ENCODE measurements at regions of chr10 and their contacts with region 1.

Region 1: DNA sequence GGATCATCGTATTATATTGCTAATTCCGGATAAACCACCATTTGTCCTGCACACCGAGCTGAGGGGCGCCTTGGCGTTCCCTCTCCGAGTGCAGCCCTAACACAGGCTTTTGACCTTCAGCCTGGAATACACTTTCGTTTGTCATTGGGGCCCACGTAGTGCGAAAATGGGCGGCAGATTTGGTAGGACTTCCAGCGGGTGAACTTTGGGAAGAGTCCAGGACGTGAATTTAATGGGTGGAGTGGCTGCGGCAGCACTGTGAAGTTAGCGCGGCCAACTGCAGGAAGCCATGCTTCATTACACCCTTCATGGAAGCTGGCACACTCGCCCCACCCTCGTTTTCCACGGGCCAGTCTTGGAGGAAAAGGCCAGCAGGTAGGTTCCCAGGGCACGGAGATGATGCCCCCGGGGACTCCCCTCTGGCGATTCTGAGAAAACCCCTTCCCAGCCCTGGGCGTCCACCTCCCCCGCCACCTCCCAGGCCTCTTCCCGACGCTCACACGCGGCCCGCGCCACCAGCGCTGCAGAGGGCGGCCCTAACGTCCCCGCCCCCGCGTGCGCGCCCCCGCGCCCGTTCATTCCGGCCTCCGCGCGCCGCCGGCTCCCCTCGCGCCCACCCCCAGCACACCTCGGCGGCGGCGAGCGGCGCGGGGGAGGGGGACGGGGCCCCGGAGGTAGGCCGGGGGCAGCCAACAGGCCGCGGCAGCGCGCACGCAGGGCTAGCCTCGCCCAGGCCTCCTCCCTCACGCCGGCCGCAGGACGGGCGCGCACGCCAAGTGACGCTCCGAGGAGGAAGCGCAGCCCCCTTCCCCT is at the start of gene MLLT10:
- DNase-seq: peak; percentile 97
- H3K4me3 Mint-ChIP-seq: peak within 1 kb of the TSS; percentile 88
- H3K27ac Mint-ChIP-seq: peak within 1 kb of the TSS; percentile 93
- H3K4me1 Mint-ChIP-seq: peaks cover 23% of the 10 kb centered on the region
- H3K27me3 Mint-ChIP-seq: peaks cover 14% of the 10 kb centered on the region
- total RNA-seq, gene MLLT10: 40.2 and 42.0 TPM in 2 replicates

Region 2: DNA sequence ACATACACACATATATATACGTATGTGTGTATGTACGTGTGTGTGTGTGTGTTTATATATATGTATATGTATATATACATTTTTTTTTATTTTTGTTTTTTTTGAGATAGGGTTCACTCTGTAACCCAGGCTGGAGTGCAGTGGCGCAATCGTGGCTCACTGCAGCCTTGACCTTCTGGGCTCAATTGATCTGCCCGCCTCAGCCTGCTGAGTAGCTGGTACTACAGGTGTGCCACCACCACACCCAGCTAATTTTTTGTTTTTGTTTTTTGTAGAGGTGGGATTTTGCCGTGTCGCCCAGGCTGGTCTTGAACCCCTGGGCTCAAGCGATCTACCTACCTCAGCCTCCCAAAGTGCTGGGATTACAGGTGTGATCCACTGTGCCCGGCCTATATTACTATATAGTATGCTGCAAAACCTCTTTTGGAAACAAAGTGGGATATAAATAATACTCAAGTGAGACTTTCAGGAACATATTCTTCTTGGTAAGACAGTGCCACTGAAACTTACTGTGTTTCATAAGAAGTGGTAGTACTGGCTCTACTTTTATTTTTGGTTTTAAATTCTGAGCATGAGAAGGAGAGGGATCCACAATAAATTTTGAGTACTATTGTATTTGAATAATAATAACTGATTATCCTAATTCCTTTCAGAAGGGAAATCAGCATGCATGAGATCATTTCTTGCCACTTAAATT is 51.3 kb after region 1 on chr10:
- intact Hi-C with region 1: loop called (anchors 5 kb)
- DNase-seq: no peak
- H3K4me3 Mint-ChIP-seq: no peak overlapping the region
- H3K27ac Mint-ChIP-seq: no peak overlapping the region
- H3K4me1 Mint-ChIP-seq: peaks cover 35% of the 10 kb centered on the region
- H3K27me3 Mint-ChIP-seq: no peaks in the 10 kb centered on the region

Region 3: GRCh38 chr10:22251751-22252223 is 718.1 kb after region 1 on chr10:
- intact Hi-C with region 1: loop called (anchors 5 kb)
- DNase-seq: peak; percentile 91
- H3K4me3 Mint-ChIP-seq: peak overlapping the region; percentile 91
- H3K27ac Mint-ChIP-seq: peak overlapping the region; percentile 98
- H3K4me1 Mint-ChIP-seq: peaks cover 31% of the 10 kb centered on the region
- H3K27me3 Mint-ChIP-seq: peaks cover 14% of the 10 kb centered on the region